A673 (cell line): ENCODE measurements at regions of chr1 and their contacts with region 1.

Region 1: DNA sequence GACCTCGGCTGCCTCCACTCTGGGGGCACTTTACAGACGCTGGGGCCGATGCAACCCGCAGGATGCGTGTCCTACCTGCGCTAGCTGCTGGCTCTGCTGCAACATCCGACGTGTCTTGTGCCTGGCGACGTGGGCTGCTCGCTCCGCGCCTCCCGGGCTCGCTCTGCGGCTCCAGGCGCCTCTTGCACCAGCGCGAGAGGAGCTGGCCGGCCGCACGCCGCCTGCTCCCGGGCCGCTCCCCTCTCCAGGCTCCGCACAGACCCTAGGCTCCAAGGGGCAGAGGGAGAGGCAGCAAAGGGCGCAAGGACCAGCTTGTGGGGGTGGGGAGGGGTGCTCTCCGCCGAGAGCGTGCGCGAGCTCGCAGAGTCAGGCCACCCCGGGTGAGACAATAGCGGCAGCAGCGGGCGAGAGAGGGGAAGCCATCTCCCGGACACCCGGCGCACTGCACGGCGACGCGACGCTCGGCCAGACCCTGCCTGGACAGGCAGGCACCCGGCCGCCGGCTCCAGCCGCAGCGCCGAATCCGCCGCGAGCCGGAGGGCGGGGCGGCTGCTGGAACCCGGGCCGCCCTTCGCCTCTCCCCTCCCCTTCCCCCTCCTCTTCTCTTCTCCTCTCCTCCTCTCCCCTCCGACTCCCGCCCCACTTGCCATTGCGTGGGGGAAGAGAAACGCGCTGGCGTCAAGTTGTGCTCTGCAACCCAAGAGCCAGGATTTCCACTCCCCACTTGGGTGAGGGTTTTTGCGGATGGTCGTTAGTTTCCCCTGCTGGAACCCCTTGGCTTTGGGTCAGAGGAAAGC is at the start of gene PIK3C2B:
- DNase-seq: peak; percentile 85
- H3K4me3 ChIP-seq: peak within 1 kb of the TSS; percentile 94
- H3K27ac ChIP-seq: peak within 1 kb of the TSS; percentile 83
- H3K4me1 ChIP-seq: peaks cover 21% of the 10 kb centered on the region
- H3K27me3 ChIP-seq: no peaks in the 10 kb centered on the region
- CTCF ChIP-seq: no peak
- total RNA-seq, gene PIK3C2B: 18.0 and 25.5 TPM in 2 replicates

Region 2: GRCh38 chr1:204431310-204432165 is 62.9 kb before region 1 on chr1:
- CTCF ChIA-PET with region 1: interaction called, 16 read pairs
- POLR2A ChIA-PET with region 1: no interaction called
- intact Hi-C with region 1: no loop called
- DNase-seq: peak; percentile 79
- H3K4me3 ChIP-seq: no peak overlapping the region
- H3K27ac ChIP-seq: no peak overlapping the region
- H3K4me1 ChIP-seq: peaks cover 21% of the 10 kb centered on the region
- H3K27me3 ChIP-seq: no peaks in the 10 kb centered on the region
- CTCF ChIP-seq: peak; percentile 97